HepG2 (cell line): ENCODE measurements at regions of chr22 and their contacts with region 1.

Region 1: DNA sequence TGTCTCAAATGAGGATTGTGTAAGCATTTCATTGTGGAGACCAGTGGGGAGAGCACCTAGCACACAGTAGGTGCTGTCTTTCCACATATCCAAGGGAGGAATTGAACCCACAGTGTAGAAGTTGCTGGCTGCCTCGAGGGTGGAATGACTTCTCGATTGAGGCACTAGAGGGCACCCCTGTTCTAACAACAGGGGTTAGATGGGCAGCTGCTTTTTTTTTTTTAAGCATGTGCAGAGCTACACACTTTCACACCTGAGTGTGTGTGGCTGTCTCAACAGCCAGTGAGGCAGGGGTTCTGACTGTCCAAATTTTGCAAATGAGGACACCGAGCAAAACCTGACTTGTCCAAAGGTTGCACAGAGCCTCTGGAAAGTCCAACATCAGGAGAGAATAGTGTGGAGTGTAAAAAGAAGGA is 118.2 kb upstream of the CRYBB3 start:
- DNase-seq: peak; percentile 56
- ATAC-seq: peak; percentile 40
- H3K4me3 ChIP-seq: no peak overlapping the region
- H3K27ac ChIP-seq: no peak overlapping the region
- H3K4me1 ChIP-seq: peaks cover 49% of the 10 kb centered on the region
- H3K27me3 ChIP-seq: no peaks in the 10 kb centered on the region
- CTCF ChIP-seq: peak; percentile 91
- EP300 ChIP-seq: no peak
- POLR2A ChIP-seq: no peak
- RAD21 ChIP-seq: peak; percentile 70

Region 2: DNA sequence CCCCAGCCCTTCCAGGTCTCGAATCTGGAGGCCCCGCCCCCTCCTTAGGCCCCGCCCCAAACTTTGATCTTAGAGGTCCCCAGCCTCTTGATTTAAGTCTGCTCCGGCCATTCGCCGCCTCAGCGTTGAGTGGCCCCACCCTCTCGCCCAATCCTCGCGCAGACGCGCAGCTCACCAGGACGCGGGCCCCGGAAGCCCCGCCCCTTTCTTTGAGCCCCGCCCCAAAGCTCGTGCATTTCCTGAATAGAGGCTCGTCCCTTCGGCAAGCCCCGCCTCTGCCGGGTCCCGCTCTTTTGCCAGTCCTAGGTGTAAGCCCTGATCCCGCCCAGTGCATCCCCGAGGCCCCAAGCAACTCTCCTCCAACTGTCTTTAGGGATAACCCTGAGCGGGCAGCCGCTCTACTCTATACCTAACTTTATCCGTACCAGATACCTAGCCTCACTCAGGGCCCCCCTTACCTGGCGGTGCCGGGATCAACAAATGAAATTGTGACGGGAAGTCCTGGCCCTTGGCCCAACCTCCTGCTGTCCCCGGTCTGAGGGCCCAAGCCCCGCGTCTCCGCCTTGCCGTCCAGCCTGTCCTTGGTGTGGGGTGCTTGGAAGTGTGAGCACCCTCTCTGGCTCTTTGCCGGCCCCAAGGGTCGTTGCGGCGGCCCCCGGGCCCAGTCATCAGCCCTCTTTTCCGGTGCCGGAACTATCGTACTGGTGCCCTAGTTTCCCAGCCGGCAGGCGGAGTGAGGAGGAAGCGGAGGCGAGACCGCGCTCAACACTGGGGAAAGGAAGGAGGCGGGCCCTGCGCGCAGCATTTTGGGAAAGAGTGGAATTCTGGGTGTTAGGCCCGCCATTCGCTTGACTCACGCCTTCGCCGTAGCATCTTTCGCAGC is 526.0 kb before region 1 on chr22 and contains the start of gene SNRPD3:
- CTCF ChIA-PET with region 1: no interaction called
- POLR2A ChIA-PET with region 1: no interaction called
- in situ Hi-C with region 1: no loop called
- intact Hi-C with region 1: no loop called
- DNase-seq: peak; percentile 96
- ATAC-seq: peak; percentile 82
- H3K4me3 ChIP-seq: peak within 1 kb of the TSS; percentile 89 to 97 (median 91)
- H3K27ac ChIP-seq: peak within 1 kb of the TSS; percentile 93
- H3K4me1 ChIP-seq: peaks cover 71% of the 10 kb centered on the region
- H3K27me3 ChIP-seq: no peaks in the 10 kb centered on the region; a peak in 1 of 5 replicates
- CTCF ChIP-seq: peak; percentile 29
- EP300 ChIP-seq: peak in 1 of 2 experiments; percentile 34; a peak in 1 of 4 replicates
- POLR2A ChIP-seq: peak in 1 of 2 experiments; percentile 76
- RAD21 ChIP-seq: 0 out of 2 replicates have a peak, but pooled peaks have one; percentile 35
- total RNA-seq, gene SNRPD3: 209 and 287 TPM in 2 replicates

Region 3: GRCh38 chr22:25013607-25014006 is 67.8 kb before region 1 on chr22:
- CTCF ChIA-PET with region 1: no interaction called
- POLR2A ChIA-PET with region 1: no interaction called
- in situ Hi-C with region 1: no loop called
- intact Hi-C with region 1: no loop called
- DNase-seq: no peak
- ATAC-seq: no peak
- H3K4me3 ChIP-seq: no peak overlapping the region
- H3K27ac ChIP-seq: no peak overlapping the region
- H3K4me1 ChIP-seq: peaks cover 18% of the 10 kb centered on the region
- H3K27me3 ChIP-seq: no peaks in the 10 kb centered on the region
- CTCF ChIP-seq: no peak
- EP300 ChIP-seq: no peak
- POLR2A ChIP-seq: no peak
- RAD21 ChIP-seq: no peak

Region 4: GRCh38 chr22:25067851-25068421 is 13.5 kb before region 1 on chr22:
- CTCF ChIA-PET with region 1: no interaction called
- POLR2A ChIA-PET with region 1: no interaction called
- in situ Hi-C with region 1: no loop called
- intact Hi-C with region 1: no loop called
- DNase-seq: no peak
- ATAC-seq: peak; percentile 37; the same call in 2 of the 3 replicates
- H3K4me3 ChIP-seq: no peak overlapping the region
- H3K27ac ChIP-seq: no peak overlapping the region
- H3K4me1 ChIP-seq: no peaks in the 10 kb centered on the region
- H3K27me3 ChIP-seq: no peaks in the 10 kb centered on the region
- CTCF ChIP-seq: no peak
- EP300 ChIP-seq: no peak
- POLR2A ChIP-seq: no peak
- RAD21 ChIP-seq: no peak

Region 5: DNA sequence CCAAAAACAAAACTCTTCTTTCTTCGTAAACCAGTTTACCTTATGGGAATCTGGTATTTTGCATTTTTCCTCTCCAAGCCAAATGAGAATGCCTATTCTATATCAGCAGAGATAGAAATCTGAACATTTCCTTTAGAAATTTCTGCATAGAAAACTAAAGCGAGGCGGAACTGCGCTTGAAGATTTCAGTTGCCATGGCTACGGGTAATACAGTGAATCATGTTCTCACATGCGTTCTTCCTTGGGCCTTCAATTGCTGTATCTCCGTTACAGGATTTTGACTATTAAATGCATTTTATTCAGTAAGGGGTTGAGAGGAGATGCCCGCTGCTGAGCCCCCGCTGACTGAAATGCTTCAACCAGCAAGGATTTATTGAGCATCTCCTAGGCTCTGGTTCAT is 10.0 kb after region 1 on chr22:
- CTCF ChIA-PET with region 1: no interaction called
- POLR2A ChIA-PET with region 1: no interaction called
- in situ Hi-C with region 1: no loop called
- intact Hi-C with region 1: no loop called
- DNase-seq: no peak
- ATAC-seq: no peak
- H3K4me3 ChIP-seq: no peak overlapping the region
- H3K27ac ChIP-seq: no peak overlapping the region
- H3K4me1 ChIP-seq: peaks cover 14% of the 10 kb centered on the region
- H3K27me3 ChIP-seq: no peaks in the 10 kb centered on the region
- CTCF ChIP-seq: no peak
- EP300 ChIP-seq: no peak
- POLR2A ChIP-seq: no peak
- RAD21 ChIP-seq: no peak

Region 6: DNA sequence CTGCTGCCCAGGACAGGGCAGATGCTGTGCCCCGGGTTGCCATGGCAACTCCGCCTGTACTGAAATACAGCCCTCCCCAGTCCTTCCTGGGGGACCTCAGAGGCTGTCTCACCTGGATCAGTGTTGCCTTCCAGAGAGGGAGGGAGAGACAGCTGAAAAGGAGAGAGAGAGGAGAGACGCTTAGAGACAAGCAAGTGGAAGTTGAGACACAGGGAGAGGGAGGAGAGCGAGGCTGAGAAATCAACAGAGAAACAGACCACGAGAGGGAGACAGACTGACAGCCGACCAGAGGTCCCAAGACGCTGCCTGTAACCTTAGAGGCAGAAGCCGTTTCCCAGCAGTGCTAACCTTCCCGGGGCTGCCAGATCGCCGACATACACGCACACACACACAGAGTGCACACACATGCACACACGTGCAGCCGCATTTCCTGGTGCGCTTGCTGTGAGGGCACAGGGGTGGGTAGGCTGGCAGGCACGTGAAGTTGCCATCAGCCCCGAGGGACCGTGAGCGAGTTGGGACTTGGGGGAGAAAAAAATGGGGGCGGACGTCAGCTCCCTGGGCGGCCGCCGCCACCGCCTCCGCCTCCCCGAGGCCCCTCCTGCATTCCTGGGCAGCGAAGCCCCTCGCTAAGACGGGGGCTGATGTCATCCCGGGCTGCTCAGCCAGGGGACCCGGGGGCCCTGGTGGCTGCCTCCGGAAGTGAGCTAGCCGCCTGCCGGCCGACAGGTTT is 29.6 kb after region 1 on chr22:
- CTCF ChIA-PET with region 1: interaction called, 3 read pairs
- POLR2A ChIA-PET with region 1: interaction called, 7 read pairs
- in situ Hi-C with region 1: no loop called
- intact Hi-C with region 1: loop called (anchors 1 kb)
- DNase-seq: peak; percentile 91
- ATAC-seq: peak; percentile 81
- H3K4me3 ChIP-seq: peak overlapping the region; percentile 82 to 94 (median 84)
- H3K27ac ChIP-seq: peak overlapping the region; percentile 92
- H3K4me1 ChIP-seq: peaks cover 59% of the 10 kb centered on the region
- H3K27me3 ChIP-seq: no peaks in the 10 kb centered on the region; a peak in 1 of 5 replicates
- CTCF ChIP-seq: peak; percentile 79
- EP300 ChIP-seq: 0 out of 4 replicates have a peak, but pooled peaks of 1 of the 2 experiments have one; percentile 1
- POLR2A ChIP-seq: peak; percentile 29 to 30; a peak in 1 of 4 replicates
- RAD21 ChIP-seq: no peak; the same call in 1 of the 2 replicates

Region 7: GRCh38 chr22:25120093-25120561 is 38.7 kb after region 1 on chr22:
- CTCF ChIA-PET with region 1: no interaction called
- POLR2A ChIA-PET with region 1: no interaction called
- in situ Hi-C with region 1: no loop called
- intact Hi-C with region 1: loop called (anchors 5 kb)
- DNase-seq: peak; percentile 92
- ATAC-seq: peak; percentile 98
- H3K4me3 ChIP-seq: peak overlapping the region in 1 of 3 experiments; percentile 51; a peak in 2 of 6 replicates
- H3K27ac ChIP-seq: peak overlapping the region; percentile 77
- H3K4me1 ChIP-seq: peaks cover 54% of the 10 kb centered on the region
- H3K27me3 ChIP-seq: no peaks in the 10 kb centered on the region
- CTCF ChIP-seq: no peak
- EP300 ChIP-seq: no peak
- POLR2A ChIP-seq: no peak
- RAD21 ChIP-seq: no peak

Region 8: DNA sequence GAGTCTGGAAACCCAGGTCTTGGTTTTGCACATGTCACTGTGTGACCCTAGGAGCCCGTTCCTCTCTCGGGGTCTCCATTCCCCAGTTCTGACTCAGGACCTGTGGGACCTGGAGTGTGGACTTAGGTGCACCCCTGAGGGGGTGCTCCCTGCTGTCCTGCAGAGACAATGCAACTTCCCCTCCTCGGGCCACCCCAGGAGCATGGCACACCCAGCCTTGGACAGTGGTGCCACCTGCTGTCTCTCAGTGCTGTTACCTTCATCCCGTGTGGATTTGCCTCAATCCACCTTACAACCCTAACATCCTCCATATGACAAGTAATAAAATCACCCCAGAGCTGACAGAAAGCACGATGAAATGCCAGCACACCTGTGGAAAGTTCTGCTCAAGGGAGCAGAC is 90.7 kb after region 1 on chr22:
- CTCF ChIA-PET with region 1: interaction called, 23 read pairs
- POLR2A ChIA-PET with region 1: no interaction called
- in situ Hi-C with region 1: loop called (anchors 5 kb)
- intact Hi-C with region 1: loop called (anchors 1 kb)
- DNase-seq: peak; percentile 21
- ATAC-seq: peak; percentile 22; the same call in 1 of the 3 replicates
- H3K4me3 ChIP-seq: no peak overlapping the region
- H3K27ac ChIP-seq: no peak overlapping the region
- H3K4me1 ChIP-seq: peaks cover 35% of the 10 kb centered on the region
- H3K27me3 ChIP-seq: no peaks in the 10 kb centered on the region
- CTCF ChIP-seq: peak; percentile 71
- EP300 ChIP-seq: no peak
- POLR2A ChIP-seq: no peak
- RAD21 ChIP-seq: peak; percentile 79